Left cardiac atrium (tissue), 4 donors: ENCODE measurements at regions of chr15 and their contacts with region 1.

Region 1: GRCh38 chr15:88657326-88658069 is 18.7 kb downstream of the ISG20 start:
- DNase-seq: peak; percentile 63
- ATAC-seq: peak; percentile 38 to 58

Region 2: DNA sequence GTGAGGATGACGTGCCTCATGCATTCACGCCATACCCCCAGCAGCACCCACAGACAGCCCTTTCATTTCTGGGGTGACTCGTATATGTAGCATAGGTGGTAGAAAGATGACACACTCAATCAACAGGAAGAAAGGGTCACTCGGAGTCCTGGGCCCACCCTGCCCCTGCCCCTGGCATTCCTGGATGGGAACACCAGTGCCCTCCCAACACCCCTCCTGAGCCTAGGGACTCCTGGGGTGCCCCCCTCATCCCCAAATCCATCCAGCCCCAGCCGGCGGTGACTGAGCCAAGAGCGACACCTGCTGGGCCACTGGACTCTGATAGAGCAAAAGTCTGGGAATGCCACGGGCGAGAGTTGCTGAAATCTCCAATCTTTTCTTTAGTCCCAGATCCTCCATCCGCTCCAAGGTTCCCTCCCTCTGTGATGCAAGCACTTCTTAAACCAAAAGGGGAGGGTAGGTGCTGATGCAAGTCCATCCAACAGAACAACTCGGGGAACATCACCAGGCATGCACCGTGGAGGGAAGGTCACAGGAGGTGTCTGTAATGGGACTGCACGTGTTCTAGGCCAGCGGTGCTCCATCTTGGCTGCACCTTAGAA is 176.8 kb after region 1 on chr15:
- intact Hi-C with region 1: loop called (anchors 1 to 10 kb)
- DNase-seq: peak; percentile 58
- ATAC-seq: peak; percentile 66 to 76